ENCODE measurements at regions of chr4 and their contacts with region 1.

Region 1: GRCh38 chr4:74133786-74134499 is 24.0 kb upstream of the MTHFD2L start:
- DNase-seq: peak; percentile 46 to 56
- H3K4me3 ChIP-seq: no peak overlapping the region
- H3K27ac ChIP-seq: no peak overlapping the region
- H3K4me1 ChIP-seq: no peaks in the 10 kb centered on the region
- H3K27me3 ChIP-seq: no peaks in the 10 kb centered on the region
- CTCF ChIP-seq: peak; percentile 81

Region 2: DNA sequence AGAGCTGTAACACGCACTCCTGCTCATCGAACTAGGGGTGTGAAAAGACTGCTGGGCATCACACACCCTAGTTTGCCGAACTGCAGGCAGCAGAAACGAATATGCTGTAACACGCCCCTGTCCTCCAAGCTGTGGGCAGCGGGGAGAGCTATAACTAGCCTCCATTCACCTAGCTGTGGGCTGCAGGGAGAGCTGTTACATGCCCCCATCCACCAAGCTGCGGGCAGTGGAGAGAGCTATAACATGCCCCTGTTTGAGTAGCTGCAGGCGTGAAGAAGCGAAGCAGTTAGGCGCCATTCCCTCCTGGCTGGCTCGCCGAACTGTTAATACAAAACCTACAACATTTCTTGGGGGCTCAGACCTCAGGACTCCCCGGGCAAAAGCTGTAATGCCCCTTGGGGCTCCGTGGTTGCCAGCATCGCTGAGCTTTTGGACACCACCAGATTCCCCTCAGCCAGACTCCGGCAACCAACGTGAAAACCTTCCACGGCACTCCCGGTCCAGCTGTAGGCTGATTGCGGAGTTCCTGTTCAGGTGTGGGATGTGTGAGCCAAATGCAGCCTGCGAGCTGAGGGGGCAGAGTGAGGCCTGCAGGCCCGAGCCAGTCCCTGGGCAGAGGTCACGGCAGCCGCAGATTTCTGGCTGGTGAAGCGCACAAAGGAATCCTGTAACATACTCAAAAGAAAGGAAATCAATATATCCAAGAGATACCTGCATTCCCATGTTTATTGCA is 834.2 kb before region 1 on chr4:
- CTCF ChIA-PET with region 1: no interaction called
- POLR2A ChIA-PET with region 1: no interaction called
- intact Hi-C with region 1: no loop called
- DNase-seq: no peak
- H3K4me3 ChIP-seq: no peak overlapping the region
- H3K27ac ChIP-seq: no peak overlapping the region
- H3K4me1 ChIP-seq: no peaks in the 10 kb centered on the region
- H3K27me3 ChIP-seq: no peaks in the 10 kb centered on the region
- CTCF ChIP-seq: no peak

Region 3: DNA sequence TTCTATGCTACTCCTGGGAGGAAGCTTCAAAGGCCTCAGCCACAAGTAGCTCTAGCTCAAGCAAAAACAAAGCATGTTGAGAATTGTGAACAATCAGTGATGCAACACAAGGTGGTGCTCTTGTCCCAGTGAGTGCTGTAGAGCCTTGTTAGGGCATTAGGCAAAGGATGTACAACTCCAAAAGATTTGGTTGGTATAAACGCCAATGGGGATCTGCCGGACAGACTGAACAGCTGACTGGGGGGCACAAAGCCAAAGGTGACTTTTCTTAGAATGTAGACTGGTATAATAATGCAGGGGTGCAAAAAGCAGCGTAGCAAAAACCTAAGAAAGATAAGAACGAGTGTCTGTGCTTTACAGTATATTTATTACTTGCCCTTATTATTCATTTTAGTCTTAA is 792.5 kb before region 1 on chr4:
- CTCF ChIA-PET with region 1: no interaction called
- POLR2A ChIA-PET with region 1: no interaction called
- intact Hi-C with region 1: loop called (anchors 1 kb)
- DNase-seq: peak in 1 of 2 experiments; percentile 4
- H3K4me3 ChIP-seq: no peak overlapping the region
- H3K27ac ChIP-seq: no peak overlapping the region
- H3K4me1 ChIP-seq: no peaks in the 10 kb centered on the region
- H3K27me3 ChIP-seq: no peaks in the 10 kb centered on the region
- CTCF ChIP-seq: peak; percentile 45

Region 4: DNA sequence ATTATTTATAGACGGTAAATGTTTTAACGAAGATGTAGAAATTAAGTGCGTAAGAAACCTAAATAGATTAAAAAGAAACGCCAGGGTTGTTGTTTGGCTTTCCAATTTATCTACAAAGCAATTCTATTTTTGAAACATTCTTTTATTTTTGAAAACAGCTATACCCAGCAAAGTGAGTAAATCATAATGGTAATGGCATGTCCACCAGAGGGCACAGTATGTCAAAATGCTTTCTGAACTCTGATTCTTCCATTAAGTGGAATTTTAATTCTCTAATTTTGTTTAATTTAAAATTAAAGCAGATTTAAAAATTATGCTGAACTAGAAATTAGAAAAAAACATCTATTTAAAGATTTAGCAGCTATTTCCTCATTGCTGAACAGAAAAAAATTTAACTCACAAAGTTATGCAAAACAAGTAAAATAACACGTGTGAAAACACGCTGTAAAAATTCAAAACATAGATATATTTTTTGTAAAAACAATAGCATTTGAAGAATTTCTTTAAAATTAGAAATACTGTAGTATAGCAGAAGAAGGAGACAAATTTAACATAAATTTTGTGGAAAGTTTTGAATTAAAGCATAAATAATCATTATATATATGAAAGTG is 540.2 kb before region 1 on chr4:
- CTCF ChIA-PET with region 1: no interaction called
- POLR2A ChIA-PET with region 1: no interaction called
- intact Hi-C with region 1: loop called (anchors 5 kb)
- DNase-seq: no peak
- H3K4me3 ChIP-seq: no peak overlapping the region
- H3K27ac ChIP-seq: no peak overlapping the region
- H3K4me1 ChIP-seq: peaks cover 3% of the 10 kb centered on the region; the same call in 1 of the 2 replicates
- H3K27me3 ChIP-seq: no peaks in the 10 kb centered on the region
- CTCF ChIP-seq: peak; percentile 68

Region 5: GRCh38 chr4:73828956-73829355 is 305.0 kb before region 1 on chr4:
- CTCF ChIA-PET with region 1: no interaction called
- POLR2A ChIA-PET with region 1: no interaction called
- intact Hi-C with region 1: no loop called
- DNase-seq: no peak
- H3K4me3 ChIP-seq: no peak overlapping the region
- H3K27ac ChIP-seq: no peak overlapping the region
- H3K4me1 ChIP-seq: no peaks in the 10 kb centered on the region
- H3K27me3 ChIP-seq: no peaks in the 10 kb centered on the region
- CTCF ChIP-seq: no peak

Region 6: GRCh38 chr4:73922766-73923630 is 210.9 kb before region 1 on chr4:
- CTCF ChIA-PET with region 1: no interaction called
- POLR2A ChIA-PET with region 1: no interaction called
- intact Hi-C with region 1: loop called (anchors 10 kb)
- DNase-seq: no peak
- H3K4me3 ChIP-seq: no peak overlapping the region
- H3K27ac ChIP-seq: no peak overlapping the region
- H3K4me1 ChIP-seq: 0 out of 2 replicates have a peak, but pooled peaks cover under 1% of the 10 kb centered on the region
- H3K27me3 ChIP-seq: no peaks in the 10 kb centered on the region
- CTCF ChIP-seq: peak; percentile 61

Region 7: DNA sequence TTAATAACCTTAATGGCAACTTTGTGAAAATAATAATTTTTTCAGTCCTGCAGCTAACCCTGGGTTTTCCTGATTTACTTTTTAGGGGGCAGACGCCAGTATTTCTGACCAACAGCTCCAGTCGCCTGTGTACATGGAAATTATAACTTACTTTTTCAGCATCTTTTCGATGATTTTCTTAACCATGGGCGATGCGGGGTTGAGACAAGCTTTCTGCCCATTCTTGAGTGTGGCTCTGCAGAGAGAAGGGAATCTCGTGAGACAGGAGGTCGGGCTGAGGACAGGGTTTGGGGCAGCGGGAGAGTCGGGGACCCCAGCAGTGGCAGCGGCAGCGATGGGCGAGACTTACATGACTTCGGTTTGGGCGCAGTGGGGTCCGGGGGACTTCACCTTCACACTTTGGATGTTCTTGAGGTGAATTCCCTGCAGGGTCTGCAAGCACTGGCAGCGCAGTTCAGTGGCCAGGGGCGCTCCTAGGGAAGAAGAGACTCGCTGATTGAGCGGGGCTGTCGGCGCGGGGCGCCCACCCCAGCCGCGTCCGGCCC is 35.4 kb before region 1 on chr4:
- CTCF ChIA-PET with region 1: no interaction called
- POLR2A ChIA-PET with region 1: no interaction called
- intact Hi-C with region 1: loop called (anchors 1 kb)
- DNase-seq: no peak
- H3K4me3 ChIP-seq: peak overlapping the region; percentile 78
- H3K27ac ChIP-seq: no peak overlapping the region
- H3K4me1 ChIP-seq: peaks cover 11% of the 10 kb centered on the region
- H3K27me3 ChIP-seq: no peaks in the 10 kb centered on the region
- CTCF ChIP-seq: no peak

Measured in PC-9 (cell line).